Psoas muscle (tissue), 8 donors: ENCODE measurements at regions of chr2 and their contacts with region 1.

Region 1: GRCh38 chr2:230144355-230144754 is 75.4 kb downstream of the SP110 start:
- DNase-seq: no peak
- ATAC-seq: no peak
- H3K4me3 ChIP-seq: no peak overlapping the region
- H3K27ac ChIP-seq: no peak overlapping the region
- H3K4me1 ChIP-seq: no peaks in the 10 kb centered on the region
- H3K27me3 ChIP-seq: no peaks in the 10 kb centered on the region
- CTCF ChIP-seq: no peak

Region 2: DNA sequence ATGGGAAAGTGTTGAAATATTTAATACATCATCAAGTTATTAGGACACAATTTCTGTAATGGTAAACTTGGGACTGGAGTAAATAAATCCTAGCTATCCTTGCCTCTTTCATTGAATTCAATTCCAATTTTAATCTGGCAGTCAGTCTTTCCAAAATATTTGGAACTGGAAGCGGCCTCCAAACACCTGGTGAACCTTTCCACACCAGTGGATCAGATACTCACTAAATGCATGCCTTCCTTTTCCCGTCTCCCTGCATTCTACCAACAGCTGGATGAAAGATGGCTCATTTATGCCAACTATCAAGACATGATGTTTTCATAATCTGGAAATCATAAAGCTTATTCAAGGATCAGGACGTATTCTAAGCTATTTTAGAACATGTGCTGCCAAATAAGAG is 1474.7 kb before region 1 on chr2:
- intact Hi-C with region 1: no loop called
- DNase-seq: no peak
- ATAC-seq: peak in 1 of 4 donors; percentile 29
- H3K4me3 ChIP-seq: no peak overlapping the region
- H3K27ac ChIP-seq: no peak overlapping the region
- H3K4me1 ChIP-seq: no peaks in the 10 kb centered on the region
- H3K27me3 ChIP-seq: no peaks in the 10 kb centered on the region
- CTCF ChIP-seq: no peak

Region 3: DNA sequence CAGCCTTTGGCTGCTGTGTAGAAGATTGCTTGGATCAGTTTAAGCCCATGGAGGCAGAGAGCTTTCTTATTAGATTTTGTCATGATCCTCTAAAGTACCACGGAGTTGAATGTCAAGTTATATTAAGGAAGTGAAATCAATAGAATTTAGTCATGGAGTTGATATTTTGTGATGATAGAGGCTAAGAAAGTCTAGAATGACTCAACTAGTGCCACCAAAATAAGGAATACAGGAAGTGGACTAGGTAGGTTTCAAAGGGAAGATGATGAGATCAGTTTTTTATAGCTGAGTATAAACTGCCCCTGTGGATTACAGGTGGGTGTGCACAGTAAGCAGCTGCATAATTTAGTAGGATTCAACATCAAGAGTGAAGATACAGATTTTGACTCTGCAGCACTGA is 196.8 kb before region 1 on chr2:
- intact Hi-C with region 1: no loop called
- DNase-seq: no peak
- ATAC-seq: no peak
- H3K4me3 ChIP-seq: no peak overlapping the region
- H3K27ac ChIP-seq: no peak overlapping the region
- H3K4me1 ChIP-seq: no peaks in the 10 kb centered on the region
- H3K27me3 ChIP-seq: no peaks in the 10 kb centered on the region
- CTCF ChIP-seq: no peak

Region 4: GRCh38 chr2:230130668-230131364 is 13.5 kb before region 1 on chr2:
- intact Hi-C with region 1: loop called in 1 of 2 experiments (anchors 1 kb)
- DNase-seq: peak in 1 of 2 donors; percentile 63
- ATAC-seq: peak in 1 of 4 donors; percentile 62
- H3K4me3 ChIP-seq: no peak overlapping the region
- H3K27ac ChIP-seq: peak overlapping the region; percentile 51
- H3K4me1 ChIP-seq: peaks cover 11% of the 10 kb centered on the region
- H3K27me3 ChIP-seq: no peaks in the 10 kb centered on the region
- CTCF ChIP-seq: no peak

Region 5: DNA sequence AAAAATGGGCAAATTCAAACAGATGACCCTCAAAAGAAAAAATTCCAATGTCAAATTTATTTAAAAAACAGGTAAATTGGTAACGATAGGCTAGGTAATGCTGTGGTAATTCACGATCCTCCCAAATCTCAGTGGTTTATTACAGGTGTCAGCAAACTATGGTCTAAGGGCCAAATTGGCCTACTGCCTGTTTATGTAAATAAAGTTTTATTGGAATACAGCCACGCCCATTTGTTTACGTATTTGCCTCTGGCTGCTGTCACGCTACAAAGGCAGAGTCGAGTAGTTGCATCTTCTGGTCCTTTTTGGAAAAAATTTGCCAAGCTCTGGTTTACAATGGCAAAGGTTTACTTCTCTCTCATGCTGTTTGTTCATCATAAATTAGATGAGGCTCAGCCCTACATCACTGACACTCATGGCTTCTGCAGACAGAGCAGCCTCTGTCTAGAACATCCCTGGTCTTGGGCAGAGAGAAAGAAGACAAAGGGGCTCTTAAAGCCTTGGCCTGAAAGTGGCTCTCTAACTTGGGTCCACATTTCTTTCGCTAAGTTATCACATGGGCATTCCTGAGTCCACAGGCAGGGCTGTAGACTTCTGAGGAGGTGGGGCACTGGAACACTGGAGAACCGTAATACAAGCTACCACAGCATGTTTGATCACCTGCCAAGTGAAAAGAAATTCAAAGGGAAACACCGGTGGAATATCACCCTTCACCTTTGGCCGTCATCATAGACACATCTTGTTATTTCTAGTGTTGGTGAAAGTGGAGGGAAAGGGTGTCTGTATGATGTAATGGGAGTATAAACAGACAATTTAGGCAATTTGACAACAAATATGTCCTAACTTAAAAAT is 40.6 kb after region 1 on chr2:
- intact Hi-C with region 1: no loop called
- DNase-seq: no peak
- ATAC-seq: no peak
- H3K4me3 ChIP-seq: no peak overlapping the region
- H3K27ac ChIP-seq: no peak overlapping the region
- H3K4me1 ChIP-seq: no peaks in the 10 kb centered on the region
- H3K27me3 ChIP-seq: no peaks in the 10 kb centered on the region
- CTCF ChIP-seq: no peak